ENCODE measurements at regions of chr18 and their contacts with region 1.

Region 1: GRCh38 chr18:47930931-47931717 is 665 bp upstream of the SMAD2 start:
- DNase-seq: peak; percentile 93
- ATAC-seq: peak; percentile 80
- H3K4me3 Mint-ChIP-seq: peak overlapping the region; percentile 84
- H3K27ac Mint-ChIP-seq: peak overlapping the region; percentile 87
- H3K4me1 Mint-ChIP-seq: peaks cover 36% of the 10 kb centered on the region
- H3K27me3 Mint-ChIP-seq: no peaks in the 10 kb centered on the region
- CTCF ChIP-seq: no peak

Region 2: GRCh38 chr18:46104128-46104911 is 1826.8 kb before region 1 on chr18 and contains the start of gene HAUS1:
- CTCF ChIA-PET with region 1: no interaction called
- POLR2A ChIA-PET with region 1: no interaction called
- intact Hi-C with region 1: loop called (anchors 10 kb)
- DNase-seq: peak; percentile 81
- ATAC-seq: peak; percentile 99
- H3K4me3 Mint-ChIP-seq: peak within 1 kb of the TSS; percentile 98
- H3K27ac Mint-ChIP-seq: peak within 1 kb of the TSS; percentile 82
- H3K4me1 Mint-ChIP-seq: peaks cover 19% of the 10 kb centered on the region
- H3K27me3 Mint-ChIP-seq: no peaks in the 10 kb centered on the region
- CTCF ChIP-seq: no peak
- total RNA-seq, gene HAUS1: 34.6 and 39.5 TPM in 2 replicates

Region 3: DNA sequence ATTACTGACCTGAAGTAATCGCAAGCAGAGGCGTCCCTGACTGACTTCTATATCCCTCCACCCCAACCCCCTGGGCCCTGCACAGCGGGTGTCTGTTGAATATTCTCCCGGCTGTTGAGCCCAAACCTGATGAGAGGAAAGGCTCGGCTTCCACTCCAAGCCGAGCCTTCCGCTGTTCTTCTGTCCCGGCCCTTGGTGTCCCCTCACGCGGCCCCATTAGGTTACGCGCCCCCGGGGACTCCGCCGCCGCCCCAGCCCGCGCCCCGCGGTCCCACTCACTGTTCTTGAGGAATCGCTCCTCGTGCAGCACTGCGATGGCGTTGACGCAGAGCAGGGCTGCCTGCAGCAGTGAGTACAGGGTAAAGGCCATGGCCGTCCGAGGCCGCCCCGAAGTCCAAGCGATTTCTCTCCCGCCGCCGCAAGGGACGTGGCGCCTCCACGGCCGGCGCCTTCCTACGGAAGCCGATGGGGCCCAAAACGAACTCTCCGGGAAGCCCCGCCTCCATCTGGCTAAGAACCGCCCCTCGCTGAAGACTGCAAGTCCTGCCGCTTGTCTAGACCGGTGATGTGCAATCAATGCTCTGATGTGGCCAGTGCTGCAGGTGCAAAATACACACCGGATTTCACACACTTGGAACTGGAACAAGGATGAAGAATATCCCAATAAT is 755.1 kb before region 1 on chr18 and contains the start of gene IER3IP1:
- CTCF ChIA-PET with region 1: no interaction called
- POLR2A ChIA-PET with region 1: no interaction called
- intact Hi-C with region 1: loop called (anchors 2 kb)
- DNase-seq: peak; percentile 86
- ATAC-seq: peak; percentile 97
- H3K4me3 Mint-ChIP-seq: no peak within 1 kb of the TSS
- H3K27ac Mint-ChIP-seq: peak within 1 kb of the TSS; percentile 73
- H3K4me1 Mint-ChIP-seq: peaks cover 2% of the 10 kb centered on the region
- H3K27me3 Mint-ChIP-seq: peaks cover 6% of the 10 kb centered on the region
- CTCF ChIP-seq: no peak
- total RNA-seq, gene IER3IP1: 8.6 and 8.8 TPM in 2 replicates

Region 4: DNA sequence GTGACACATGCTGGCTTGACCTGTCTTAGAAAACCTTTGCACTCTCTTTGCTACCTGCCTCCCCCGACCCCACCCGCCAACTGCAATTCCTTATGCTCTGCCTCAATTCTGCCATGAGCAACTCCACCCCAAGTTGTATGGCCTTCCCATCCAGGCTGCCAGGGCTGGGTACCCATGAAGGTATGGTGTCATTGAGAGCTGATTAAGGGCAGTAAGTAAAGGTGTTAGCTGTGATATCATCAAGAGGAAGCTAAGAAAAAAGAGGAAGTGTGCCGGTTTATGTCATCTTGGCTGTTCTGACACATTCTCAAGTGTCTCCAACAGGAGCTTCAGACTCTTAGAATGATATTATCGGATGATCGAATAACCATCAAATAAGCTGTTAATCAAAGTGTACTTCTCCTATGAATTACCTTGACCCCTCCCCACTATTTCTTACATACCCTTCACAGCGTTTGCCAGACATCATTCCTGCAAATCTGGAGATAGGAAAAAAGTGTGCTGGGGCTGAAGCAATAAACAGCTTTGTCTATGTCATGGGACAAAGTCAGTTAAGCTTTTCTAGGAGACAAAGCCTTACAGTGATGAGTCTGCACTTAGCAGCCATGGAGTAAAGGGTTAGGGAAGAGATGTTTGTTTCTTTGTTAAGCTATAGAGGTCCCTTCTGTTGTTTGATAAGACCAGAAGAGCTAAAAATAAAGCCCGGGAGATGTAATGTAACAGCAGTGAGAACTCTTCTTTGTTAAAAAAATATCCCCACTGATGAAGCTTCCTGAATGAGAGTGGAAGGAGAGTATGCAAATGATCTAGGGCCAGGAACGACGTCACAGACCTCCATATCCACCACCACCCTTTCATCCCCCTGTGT is 39.8 kb after region 1 on chr18:
- CTCF ChIA-PET with region 1: no interaction called
- POLR2A ChIA-PET with region 1: interaction called, 6 read pairs
- intact Hi-C with region 1: loop called (anchors 1 kb)
- DNase-seq: no peak
- ATAC-seq: peak; percentile 79
- H3K4me3 Mint-ChIP-seq: no peak overlapping the region
- H3K27ac Mint-ChIP-seq: no peak overlapping the region
- H3K4me1 Mint-ChIP-seq: peaks cover 20% of the 10 kb centered on the region
- H3K27me3 Mint-ChIP-seq: peaks cover 32% of the 10 kb centered on the region
- CTCF ChIP-seq: no peak

Region 5: GRCh38 chr18:48161191-48161910 is 230.2 kb after region 1 on chr18:
- CTCF ChIA-PET with region 1: no interaction called
- POLR2A ChIA-PET with region 1: no interaction called
- intact Hi-C with region 1: loop called (anchors 10 kb)
- DNase-seq: peak; percentile 41
- ATAC-seq: peak; percentile 94
- H3K4me3 Mint-ChIP-seq: peak overlapping the region; percentile 74
- H3K27ac Mint-ChIP-seq: no peak overlapping the region
- H3K4me1 Mint-ChIP-seq: peaks cover 7% of the 10 kb centered on the region
- H3K27me3 Mint-ChIP-seq: peaks cover 64% of the 10 kb centered on the region
- CTCF ChIP-seq: no peak

Region 6: DNA sequence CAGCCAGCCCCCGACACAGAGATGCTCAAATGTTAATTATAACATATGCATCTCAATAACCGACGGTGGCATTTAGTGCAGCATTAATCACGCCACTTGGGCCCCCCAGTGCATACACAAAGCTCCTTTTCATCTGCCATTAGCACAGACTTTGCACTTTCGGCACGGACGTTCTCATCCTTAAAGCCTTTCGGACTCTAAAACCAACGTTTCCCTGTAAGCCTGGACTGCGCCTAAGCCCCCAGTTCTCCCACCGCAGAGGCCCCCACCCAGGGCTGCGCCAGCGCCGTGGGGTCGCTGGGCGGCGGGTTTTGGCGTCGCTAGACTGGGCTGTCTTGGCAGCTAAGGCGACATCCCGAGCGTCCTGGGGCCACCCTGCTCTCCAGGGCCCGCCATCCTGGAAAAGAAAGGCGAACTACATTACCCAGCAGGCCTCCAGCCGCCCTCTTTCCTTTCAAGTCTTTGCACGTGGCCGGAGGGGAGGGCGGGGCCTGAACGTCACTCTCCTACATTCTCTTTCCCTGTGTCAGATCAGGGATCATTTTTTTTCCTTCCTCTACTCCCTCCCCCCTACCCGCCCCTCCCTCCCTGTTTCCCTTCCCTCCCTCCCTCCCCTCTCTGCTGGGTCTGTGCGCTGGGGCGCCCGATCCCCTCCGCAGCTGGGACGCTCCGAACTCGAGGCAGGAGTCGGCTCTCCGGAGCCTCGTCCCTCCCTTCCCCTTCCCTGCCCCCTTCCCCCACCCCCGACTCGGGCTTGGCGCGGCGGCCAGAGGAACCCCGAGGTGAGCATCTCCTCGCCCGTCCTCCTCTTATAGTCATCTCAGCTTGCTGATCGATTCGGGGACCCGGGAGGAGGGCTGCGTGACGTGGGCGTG is 607.6 kb after region 1 on chr18 and contains the start of gene CTIF:
- CTCF ChIA-PET with region 1: no interaction called
- POLR2A ChIA-PET with region 1: no interaction called
- intact Hi-C with region 1: loop called (anchors 1 kb)
- DNase-seq: peak; percentile 49
- ATAC-seq: peak; percentile 81
- H3K4me3 Mint-ChIP-seq: peak within 1 kb of the TSS; percentile 91
- H3K27ac Mint-ChIP-seq: peak within 1 kb of the TSS; percentile 50
- H3K4me1 Mint-ChIP-seq: peaks cover 8% of the 10 kb centered on the region
- H3K27me3 Mint-ChIP-seq: no peaks in the 10 kb centered on the region
- CTCF ChIP-seq: no peak
- total RNA-seq, gene CTIF: 9.3 and 9.7 TPM in 2 replicates

Region 7: DNA sequence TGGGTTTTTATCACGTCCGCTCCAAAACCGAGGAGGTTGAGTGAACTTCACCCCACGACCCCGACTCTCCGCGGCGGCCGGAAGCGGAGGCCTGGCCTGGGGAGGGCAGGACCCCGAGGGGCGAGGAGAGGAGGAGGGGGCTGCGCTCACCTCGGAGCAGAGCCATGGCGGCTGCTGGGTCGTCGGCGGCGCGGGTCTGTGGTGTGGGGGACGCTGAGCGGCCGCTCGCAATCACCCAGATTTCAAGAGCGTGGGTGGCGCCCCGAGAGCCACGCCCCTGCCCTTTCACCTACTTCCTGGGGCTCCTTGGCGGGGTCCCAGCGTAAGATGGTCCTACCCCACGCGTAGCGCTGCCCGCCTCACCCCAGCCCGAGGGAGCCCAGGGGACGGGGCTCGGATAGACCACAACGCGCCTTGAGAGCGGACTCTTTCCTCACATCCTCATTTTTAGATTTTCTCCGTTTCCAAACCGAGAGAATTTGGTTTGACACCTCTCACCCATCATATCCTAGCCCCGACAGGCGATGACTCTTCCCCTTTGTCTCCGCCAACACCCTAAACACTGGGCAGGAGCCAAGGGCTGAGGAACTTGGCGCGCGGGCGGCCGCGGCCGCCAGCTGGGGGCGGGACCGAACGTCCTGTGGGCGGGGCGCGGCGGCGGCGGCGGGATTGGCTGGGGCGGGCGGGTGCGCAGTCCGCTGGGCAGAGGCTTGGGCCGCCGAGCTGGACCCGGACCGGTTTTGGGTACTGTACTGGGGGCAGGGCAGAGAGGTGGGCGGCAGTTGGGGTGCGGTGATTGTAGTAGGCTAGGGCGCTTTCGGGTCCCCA is 1882.4 kb after region 1 on chr18 and contains the start of gene ACAA2:
- CTCF ChIA-PET with region 1: no interaction called
- POLR2A ChIA-PET with region 1: no interaction called
- intact Hi-C with region 1: loop called (anchors 2 kb)
- DNase-seq: peak; percentile 79
- ATAC-seq: peak; percentile 88
- H3K4me3 Mint-ChIP-seq: peak within 1 kb of the TSS; percentile 96
- H3K27ac Mint-ChIP-seq: peak within 1 kb of the TSS; percentile 95
- H3K4me1 Mint-ChIP-seq: peaks cover 24% of the 10 kb centered on the region
- H3K27me3 Mint-ChIP-seq: no peaks in the 10 kb centered on the region
- CTCF ChIP-seq: no peak
- total RNA-seq, gene ACAA2: 24.9 and 26.9 TPM in 2 replicates

Measured in activated B cell treated with CpG ODN at 0.5 μM for 24 hours (primary cell).